Left cardiac atrium (tissue), 4 donors: ENCODE measurements at regions of chr2 and their contacts with region 1.

Region 1: GRCh38 chr2:205766779-205767359 is 84.6 kb downstream of the NRP2 start:
- DNase-seq: peak; percentile 45
- ATAC-seq: no peak

Region 2: DNA sequence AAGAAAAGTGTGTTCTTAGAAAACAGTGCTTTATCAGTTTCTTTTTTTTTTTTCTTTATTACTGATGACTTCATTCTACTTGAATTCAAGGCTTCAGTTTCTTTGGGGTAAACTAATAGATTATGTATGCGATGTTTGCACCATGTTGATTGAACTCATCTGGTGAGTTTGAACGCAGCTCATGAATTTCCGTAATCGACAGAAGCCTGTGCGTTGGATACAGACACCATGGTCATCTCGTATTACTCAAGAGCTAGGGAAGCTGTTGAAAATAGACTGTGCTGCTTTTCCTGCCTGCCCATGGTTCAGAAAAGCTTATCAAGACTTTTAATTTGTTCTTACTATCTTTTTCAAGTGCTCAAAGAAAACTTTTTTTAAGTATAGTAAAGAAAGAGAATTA is 270.1 kb before region 1 on chr2:
- intact Hi-C with region 1: no loop called
- DNase-seq: no peak
- ATAC-seq: peak; percentile 57 to 76

Region 3: GRCh38 chr2:205680067-205680466 is 86.8 kb before region 1 on chr2:
- intact Hi-C with region 1: no loop called
- DNase-seq: peak; percentile 39
- ATAC-seq: peak; percentile 17 to 19

Region 4: DNA sequence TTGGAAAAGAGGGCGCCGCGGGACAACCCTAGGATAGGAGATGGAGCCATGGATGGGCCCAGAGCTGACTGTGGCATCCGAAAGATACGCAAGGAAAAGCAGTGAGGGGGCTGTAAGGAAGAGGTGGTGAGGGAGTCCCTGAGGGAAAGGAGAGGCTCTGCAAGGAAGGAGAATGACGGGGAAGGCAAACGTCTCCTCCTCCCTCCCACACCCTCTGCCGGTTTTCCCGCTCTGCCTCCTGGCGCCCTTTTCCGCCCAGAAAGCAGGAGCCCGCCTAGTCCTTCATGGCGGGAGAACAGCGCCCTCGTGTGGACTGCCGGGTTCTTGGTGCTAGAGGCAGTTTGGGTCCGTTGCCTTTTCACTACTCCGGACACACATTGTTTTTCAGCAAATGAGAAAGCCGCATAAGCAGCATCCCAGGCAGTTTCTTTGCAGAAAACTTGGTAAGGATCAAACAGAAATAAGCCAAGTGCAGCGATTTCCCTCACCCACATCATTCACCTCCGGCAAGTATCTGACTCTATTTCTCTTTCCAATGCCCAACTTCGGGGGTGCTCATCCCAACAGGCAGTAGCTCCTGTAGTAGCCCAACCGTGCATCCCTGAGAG is 118.7 kb after region 1 on chr2:
- intact Hi-C with region 1: loop called in 1 of 2 experiments (anchors 2 kb)
- DNase-seq: peak; percentile 88
- ATAC-seq: peak; percentile 89 to 95

Region 5: GRCh38 chr2:205925373-205926337 is 158.8 kb after region 1 on chr2:
- intact Hi-C with region 1: loop called (anchors 1 to 5 kb)
- DNase-seq: peak; percentile 84
- ATAC-seq: peak; percentile 92 to 94

Region 6: GRCh38 chr2:207223051-207223450 is 1456.2 kb after region 1 on chr2:
- intact Hi-C with region 1: no loop called
- DNase-seq: no peak
- ATAC-seq: no peak